PC-9 (cell line): ENCODE measurements at regions of chr22 and their contacts with region 1.

Region 1: DNA sequence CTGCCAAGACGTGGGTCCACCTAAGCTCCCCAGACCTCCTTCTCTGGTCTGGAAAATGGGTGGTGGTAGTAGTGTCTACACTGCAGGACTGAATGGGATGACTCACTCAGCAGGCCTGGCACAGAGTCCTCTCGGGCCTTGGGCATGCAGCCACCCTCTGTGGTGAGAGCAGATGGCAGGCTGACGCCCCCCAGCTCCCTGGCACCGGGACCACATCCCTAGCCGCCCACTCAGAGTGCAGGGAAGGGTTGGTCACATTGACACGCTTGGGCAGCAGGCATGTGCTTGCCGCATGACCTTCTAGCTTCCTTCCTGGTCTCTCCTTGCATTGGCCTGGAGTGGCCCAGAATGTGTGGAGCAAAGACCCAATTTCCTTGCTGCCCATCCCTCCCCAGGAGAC is 30.7 kb upstream of the PRODH start:
- DNase-seq: no peak
- H3K4me3 ChIP-seq: no peak overlapping the region
- H3K27ac ChIP-seq: no peak overlapping the region
- H3K4me1 ChIP-seq: no peaks in the 10 kb centered on the region
- H3K27me3 ChIP-seq: peaks cover 6% of the 10 kb centered on the region; the same call in 1 of the 2 replicates
- CTCF ChIP-seq: no peak

Region 2: GRCh38 chr22:18947905-18948304 is 18.8 kb before region 1 on chr22:
- CTCF ChIA-PET with region 1: interaction called, 16 read pairs
- POLR2A ChIA-PET with region 1: no interaction called
- intact Hi-C with region 1: no loop called
- DNase-seq: no peak
- H3K4me3 ChIP-seq: no peak overlapping the region
- H3K27ac ChIP-seq: no peak overlapping the region
- H3K4me1 ChIP-seq: no peaks in the 10 kb centered on the region
- H3K27me3 ChIP-seq: peaks cover 25% of the 10 kb centered on the region
- CTCF ChIP-seq: no peak

Region 3: GRCh38 chr22:20271113-20271994 is 1304.6 kb after region 1 on chr22:
- CTCF ChIA-PET with region 1: no interaction called
- POLR2A ChIA-PET with region 1: interaction called, 23 read pairs
- intact Hi-C with region 1: no loop called
- DNase-seq: no peak
- H3K4me3 ChIP-seq: no peak overlapping the region
- H3K27ac ChIP-seq: no peak overlapping the region
- H3K4me1 ChIP-seq: no peaks in the 10 kb centered on the region
- H3K27me3 ChIP-seq: no peaks in the 10 kb centered on the region
- CTCF ChIP-seq: no peak